ENCODE measurements at regions of chr9 and their contacts with region 1.

Region 1: GRCh38 chr9:6272229-6272598 is 56.0 kb upstream of the TPD52L3 start:
- DNase-seq: no peak

Region 2: DNA sequence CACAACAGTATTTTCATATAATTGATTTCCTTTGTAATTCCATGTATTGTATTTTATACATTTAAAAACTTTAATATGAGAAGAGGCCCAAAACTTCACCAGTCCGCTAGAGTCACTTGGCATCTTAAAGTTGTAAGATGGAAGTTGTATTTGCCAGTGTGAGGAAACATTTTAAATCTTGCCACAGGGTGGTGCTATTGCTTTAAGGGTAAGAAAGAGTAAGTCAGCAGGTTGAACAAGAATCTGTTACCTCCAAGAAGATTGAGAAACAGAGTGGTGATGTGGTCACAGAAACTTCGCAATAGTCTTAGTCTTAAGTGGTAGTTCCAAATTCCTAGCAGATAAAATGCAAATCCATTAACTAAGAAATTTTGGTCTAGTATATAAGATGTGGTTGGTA is 217.0 kb before region 1 on chr9:
- intact Hi-C with region 1: no loop called
- DNase-seq: no peak

Region 3: DNA sequence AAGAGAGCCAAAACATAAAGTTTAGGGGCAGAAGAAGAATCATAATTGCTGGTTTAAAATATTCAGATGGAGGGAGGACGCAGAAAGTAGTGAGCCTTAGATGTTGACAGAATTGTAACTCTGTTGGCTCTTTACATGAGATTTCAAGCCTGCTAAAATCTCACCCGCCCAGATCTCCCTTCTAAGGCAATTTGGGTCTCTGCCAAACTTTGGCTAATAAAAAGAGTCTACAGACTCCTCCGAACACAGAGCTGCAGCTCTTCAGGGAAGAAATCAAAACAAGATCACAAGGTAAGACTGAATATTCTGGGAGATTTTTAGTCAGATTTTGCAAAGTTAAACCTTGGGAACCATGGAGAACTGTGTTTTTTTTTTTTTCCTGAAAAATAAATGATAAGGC is 56.7 kb before region 1 on chr9 and contains the start of gene IL33:
- intact Hi-C with region 1: loop called in 1 of 2 experiments (anchors 10 kb)
- DNase-seq: no peak
- total RNA-seq, gene IL33: 83.1 to 93.8 TPM

Region 4: GRCh38 chr9:6538666-6539071 is 266.5 kb after region 1 on chr9:
- intact Hi-C with region 1: no loop called
- DNase-seq: no peak

Measured in posterior vena cava (tissue), 2 donors.